Right ventricle myocardium inferior (tissue), 1 donor: ENCODE measurements at regions of chr1 and their contacts with region 1.

Region 1: DNA sequence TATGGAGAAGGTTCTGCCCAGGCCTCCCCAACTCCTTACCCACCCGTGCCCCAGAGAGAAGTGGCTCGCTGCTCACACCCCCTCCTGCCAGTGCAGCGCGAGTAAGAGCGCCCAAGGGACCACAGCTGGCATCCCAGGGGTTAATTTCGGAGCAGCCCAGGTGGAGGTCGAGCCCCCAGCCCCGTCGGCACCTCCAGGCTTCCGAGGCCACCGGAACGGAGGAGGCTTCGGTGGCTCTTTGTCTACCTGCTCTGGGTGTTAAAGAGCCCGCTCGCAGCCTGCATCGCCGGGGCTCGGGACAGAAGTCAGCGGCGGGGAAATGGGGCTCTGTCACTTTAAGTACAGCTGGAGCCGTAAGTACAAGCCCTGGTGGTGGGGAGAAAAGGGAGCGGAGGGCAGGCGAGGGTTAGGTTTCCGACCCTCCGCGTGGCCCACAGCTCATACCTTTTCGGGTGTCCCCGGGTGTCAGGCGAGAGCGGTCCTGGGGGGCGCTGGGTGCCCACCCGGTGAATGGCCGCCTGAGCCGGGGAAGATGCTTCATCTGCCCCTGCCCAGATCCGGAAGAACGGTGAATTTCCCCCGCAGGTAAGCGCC is 89.4 kb upstream of the IPO9 start:
- DNase-seq: peak; percentile 83
- ATAC-seq: peak; percentile 54

Region 2: DNA sequence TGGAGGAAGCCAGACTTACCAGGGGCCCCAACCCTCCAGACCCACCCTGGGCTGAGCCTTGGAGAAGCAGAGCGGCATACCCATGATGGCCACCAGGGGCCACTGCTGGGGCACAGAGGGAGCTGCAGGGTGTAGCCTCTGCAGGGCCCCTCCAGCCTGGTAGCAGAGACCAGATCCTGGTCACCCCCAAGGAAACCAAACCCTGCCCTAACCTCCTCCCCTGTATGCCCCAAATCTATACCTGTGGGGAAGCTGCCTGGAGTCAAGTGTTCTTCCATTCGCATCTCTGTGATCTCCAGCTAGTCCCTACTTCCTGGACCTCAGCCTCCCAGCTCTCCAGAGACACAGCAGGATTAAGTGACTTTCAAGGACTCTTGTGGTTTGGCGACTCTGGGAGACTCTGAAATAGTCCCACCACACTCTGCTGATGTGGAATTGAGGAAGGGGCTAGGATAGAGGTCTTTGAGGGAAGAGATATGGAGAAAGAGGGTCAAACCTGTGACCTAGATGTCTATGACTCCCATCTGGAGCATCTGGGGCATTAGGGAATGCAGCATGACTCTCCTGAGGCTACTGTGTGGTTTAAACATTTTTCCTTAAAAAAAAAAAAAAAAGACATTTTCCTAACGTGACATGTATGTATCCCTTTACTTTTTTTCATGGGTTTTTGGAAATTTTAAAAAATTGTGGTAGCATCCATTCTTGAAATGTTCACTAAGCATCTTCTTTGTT is 29.9 kb before region 1 on chr1:
- intact Hi-C with region 1: loop called (anchors 1 kb)
- DNase-seq: peak; percentile 87
- ATAC-seq: peak; percentile 51

Region 3: DNA sequence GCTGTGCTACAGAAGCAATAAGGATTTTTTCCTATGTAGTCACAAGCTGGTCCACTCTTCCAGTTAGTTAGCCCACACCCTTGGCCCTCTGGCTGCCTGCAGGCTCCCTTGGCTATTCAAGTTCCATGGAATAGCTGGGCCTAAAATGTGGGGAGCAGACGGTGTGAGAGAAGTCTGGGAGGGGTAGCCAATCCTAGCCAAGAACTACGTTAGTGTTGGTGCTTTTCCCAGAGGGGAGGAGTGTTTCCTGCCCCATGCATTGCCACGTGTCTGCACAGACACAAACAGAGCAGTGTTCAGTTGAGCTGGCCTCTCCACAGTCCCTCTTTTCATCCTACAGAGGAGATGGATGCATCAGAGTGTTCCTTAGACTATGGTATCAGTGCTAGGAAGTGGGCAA is 30.4 kb after region 1 on chr1:
- intact Hi-C with region 1: loop called (anchors 5 kb)
- DNase-seq: peak; percentile 76
- ATAC-seq: peak; percentile 82